Lower leg skin (tissue), 4 donors: ENCODE measurements at regions of chr18 and their contacts with region 1.

Region 1: GRCh38 chr18:27605107-27605834 is 420.2 kb upstream of the CHST9 start:
- DNase-seq: peak; percentile 19 to 84
- H3K4me3 ChIP-seq: no peak overlapping the region
- CTCF ChIP-seq: no peak
- POLR2A ChIP-seq: no peak

Region 2: GRCh38 chr18:27022463-27022862 is 582.8 kb before region 1 on chr18:
- intact Hi-C with region 1: loop called (anchors 10 kb)
- DNase-seq: no peak
- H3K4me3 ChIP-seq: no peak overlapping the region
- CTCF ChIP-seq: no peak
- POLR2A ChIP-seq: no peak

Region 3: DNA sequence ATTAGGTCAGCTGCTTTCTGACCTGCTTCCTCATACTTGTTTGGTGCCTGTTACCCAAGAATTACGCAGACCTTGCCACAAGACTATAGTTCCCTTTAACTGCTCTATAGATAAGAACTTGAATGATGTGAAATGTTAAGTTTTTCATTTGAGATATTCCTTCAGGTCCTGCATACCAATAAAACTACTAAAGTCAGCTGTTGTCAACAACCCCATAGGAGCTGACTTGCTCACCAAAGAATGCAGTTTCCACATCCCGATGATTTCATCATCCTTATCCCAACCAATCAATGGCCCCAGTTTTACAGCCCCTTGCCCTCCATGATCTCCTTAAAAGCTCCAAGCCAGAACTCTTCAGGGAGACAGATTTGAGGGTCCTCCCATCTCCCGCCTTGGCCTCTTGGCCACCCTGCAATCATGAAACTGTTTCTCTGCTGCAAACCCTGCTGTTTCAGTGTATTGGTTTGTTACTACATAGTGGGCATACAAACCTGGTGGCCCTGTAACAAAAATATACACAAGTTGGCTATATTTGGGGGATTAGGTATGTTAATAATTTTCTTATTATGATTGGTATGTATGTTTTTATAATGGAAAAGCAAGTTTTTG is 23.9 kb before region 1 on chr18:
- intact Hi-C with region 1: no loop called
- DNase-seq: no peak
- H3K4me3 ChIP-seq: no peak overlapping the region
- CTCF ChIP-seq: no peak
- POLR2A ChIP-seq: no peak

Region 4: DNA sequence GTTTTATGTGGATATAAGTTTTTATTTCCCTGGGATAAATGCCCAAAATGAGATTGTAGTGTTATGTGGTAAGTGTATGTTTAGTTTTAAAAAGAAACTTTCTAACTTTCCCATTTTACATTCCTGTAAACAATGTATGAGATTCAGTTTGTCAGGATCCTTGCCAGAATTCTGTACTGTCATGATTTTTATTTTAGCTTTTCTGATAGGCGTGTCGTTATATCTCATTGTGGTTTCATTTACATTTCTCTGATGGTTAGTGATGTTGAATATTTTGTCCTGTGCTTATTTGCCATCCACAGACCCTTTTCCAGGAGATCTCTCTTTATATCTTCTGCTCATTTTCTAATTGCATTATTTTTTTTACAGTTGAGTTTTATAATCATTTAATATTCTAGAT is 817.3 kb after region 1 on chr18:
- intact Hi-C with region 1: no loop called
- DNase-seq: no peak
- H3K4me3 ChIP-seq: no peak overlapping the region
- CTCF ChIP-seq: no peak
- POLR2A ChIP-seq: no peak

Region 5: GRCh38 chr18:29309366-29309765 is 1704.1 kb after region 1 on chr18:
- intact Hi-C with region 1: no loop called
- DNase-seq: no peak
- H3K4me3 ChIP-seq: no peak overlapping the region
- CTCF ChIP-seq: no peak
- POLR2A ChIP-seq: no peak